H1 (cell line): ENCODE measurements at regions of chr11 and their contacts with region 1.

Region 1: DNA sequence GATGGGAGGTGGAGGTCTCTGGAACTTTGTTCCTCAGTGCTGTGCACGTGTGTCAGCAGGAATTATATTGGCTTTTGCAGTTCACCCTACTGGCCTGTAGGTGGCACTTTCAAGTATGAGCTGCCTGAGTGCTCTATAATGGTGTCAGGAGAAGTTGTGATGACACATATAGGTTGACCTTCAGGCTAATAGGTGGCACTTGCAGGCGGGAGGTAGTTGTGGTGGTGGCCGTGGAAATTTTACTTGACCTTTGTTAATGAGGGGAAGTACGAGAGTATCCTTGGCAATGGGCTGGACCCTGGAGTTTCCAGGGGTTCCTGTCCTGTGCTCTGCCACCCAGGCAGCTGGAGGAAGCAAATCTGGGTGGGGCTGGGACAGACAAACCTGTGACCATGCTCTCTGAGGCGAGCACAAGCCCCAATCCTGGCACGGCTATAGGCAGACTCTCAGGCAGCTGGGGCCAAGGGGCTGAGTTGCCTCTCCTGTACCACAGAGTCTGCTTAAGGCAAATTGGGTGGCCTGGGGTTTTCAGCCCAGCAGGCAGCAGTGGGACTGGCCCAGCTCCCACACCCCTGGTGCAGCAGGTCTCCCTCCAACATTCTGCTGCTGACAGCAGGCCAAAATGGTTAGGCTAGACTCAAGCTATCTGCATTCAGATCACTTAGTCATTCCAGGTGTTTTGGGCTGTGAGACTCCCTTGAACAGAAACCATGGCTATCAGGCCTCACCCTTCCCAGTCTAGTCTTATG is 147.5 kb upstream of the CTSC start:
- DNase-seq: peak in 1 of 2 experiments; percentile 63
- H3K4me3 ChIP-seq: no peak overlapping the region
- H3K27ac ChIP-seq: no peak overlapping the region
- H3K4me1 ChIP-seq: no peaks in the 10 kb centered on the region; a peak in 1 of 7 replicates
- H3K27me3 ChIP-seq: no peaks in the 10 kb centered on the region
- CTCF ChIP-seq: peak; percentile 36 to 86 (median 63)
- EP300 ChIP-seq: no peak
- POLR2A ChIP-seq: no peak
- RAD21 ChIP-seq: peak; percentile 38 to 64; a peak in 3 of 4 replicates

Region 2: DNA sequence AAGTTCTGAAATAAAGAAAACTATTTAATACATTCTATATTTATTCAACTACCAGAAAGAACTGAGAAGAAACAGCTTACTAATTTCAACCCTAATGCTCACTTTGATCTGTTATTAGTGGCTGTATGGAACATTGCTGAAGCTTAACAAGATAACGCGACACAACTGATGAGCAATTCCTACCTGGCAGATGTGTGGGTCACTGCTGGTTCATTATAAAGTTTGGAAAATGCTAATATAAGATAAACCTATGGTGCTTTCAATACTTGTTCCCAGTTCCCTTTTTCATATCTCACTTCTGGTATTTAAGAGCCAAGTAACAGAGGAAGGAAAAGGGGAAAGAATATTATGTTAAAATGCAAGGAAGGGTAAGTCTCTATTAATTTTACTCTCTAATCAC is 158.0 kb before region 1 on chr11:
- CTCF ChIA-PET with region 1: interaction called, 11 read pairs
- POLR2A ChIA-PET with region 1: no interaction called
- DNase-seq: no peak
- H3K4me3 ChIP-seq: no peak overlapping the region
- H3K27ac ChIP-seq: no peak overlapping the region
- H3K4me1 ChIP-seq: peaks cover 4 to 13% (median 6%) of the 10 kb centered on the region in 4 experiments; a peak in 5 of 7 replicates
- H3K27me3 ChIP-seq: no peaks in the 10 kb centered on the region
- CTCF ChIP-seq: no peak
- EP300 ChIP-seq: no peak
- POLR2A ChIP-seq: no peak
- RAD21 ChIP-seq: no peak

Region 3: GRCh38 chr11:88474655-88475054 is 10.4 kb before region 1 on chr11:
- CTCF ChIA-PET with region 1: interaction called, 11 read pairs
- POLR2A ChIA-PET with region 1: no interaction called
- DNase-seq: no peak
- H3K4me3 ChIP-seq: no peak overlapping the region
- H3K27ac ChIP-seq: no peak overlapping the region
- H3K4me1 ChIP-seq: no peaks in the 10 kb centered on the region
- H3K27me3 ChIP-seq: no peaks in the 10 kb centered on the region
- CTCF ChIP-seq: no peak
- EP300 ChIP-seq: no peak
- POLR2A ChIP-seq: no peak
- RAD21 ChIP-seq: no peak

Region 4: GRCh38 chr11:88501541-88501940 is 16.5 kb after region 1 on chr11:
- CTCF ChIA-PET with region 1: interaction called, 28 read pairs
- POLR2A ChIA-PET with region 1: no interaction called
- DNase-seq: no peak
- H3K4me3 ChIP-seq: no peak overlapping the region
- H3K27ac ChIP-seq: no peak overlapping the region
- H3K4me1 ChIP-seq: no peaks in the 10 kb centered on the region
- H3K27me3 ChIP-seq: no peaks in the 10 kb centered on the region
- CTCF ChIP-seq: no peak
- EP300 ChIP-seq: no peak
- POLR2A ChIP-seq: no peak
- RAD21 ChIP-seq: no peak

Region 5: DNA sequence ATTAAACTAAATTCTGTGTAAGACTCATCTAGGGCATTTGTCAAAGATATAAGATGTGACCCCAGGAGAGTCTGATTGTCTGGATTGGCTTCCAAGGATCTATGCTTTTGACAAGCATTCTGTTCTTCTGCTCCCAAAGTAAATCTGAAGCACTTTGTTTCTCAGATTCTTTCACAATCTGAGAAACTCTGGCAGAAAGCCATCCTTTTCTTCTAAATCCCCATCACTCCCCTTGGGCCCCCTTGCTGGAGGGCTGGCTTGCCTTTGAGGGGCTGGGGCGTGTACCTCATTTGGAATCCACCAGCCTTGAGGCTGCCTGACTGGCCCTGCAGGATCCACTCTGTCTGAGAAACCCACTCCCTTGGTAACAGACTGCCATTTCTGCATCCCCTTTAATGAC is 26.0 kb after region 1 on chr11:
- CTCF ChIA-PET with region 1: interaction called, 10 read pairs
- POLR2A ChIA-PET with region 1: interaction called, 7 read pairs
- DNase-seq: no peak
- H3K4me3 ChIP-seq: no peak overlapping the region
- H3K27ac ChIP-seq: no peak overlapping the region
- H3K4me1 ChIP-seq: peaks cover 0 to 6% (median 2%) of the 10 kb centered on the region in 4 experiments; a peak in 5 of 7 replicates
- H3K27me3 ChIP-seq: peaks cover 0 to 35% (median 18%) of the 10 kb centered on the region in 4 experiments; a peak in 6 of 7 replicates
- CTCF ChIP-seq: no peak
- EP300 ChIP-seq: no peak
- POLR2A ChIP-seq: no peak
- RAD21 ChIP-seq: no peak

Region 6: GRCh38 chr11:88555018-88555828 is 70.2 kb after region 1 on chr11:
- CTCF ChIA-PET with region 1: no interaction called
- POLR2A ChIA-PET with region 1: no interaction called
- DNase-seq: no peak
- H3K4me3 ChIP-seq: no peak overlapping the region
- H3K27ac ChIP-seq: no peak overlapping the region
- H3K4me1 ChIP-seq: peaks cover 0 to 2% (median 0%) of the 10 kb centered on the region in 4 experiments; a peak in 1 of 7 replicates
- H3K27me3 ChIP-seq: no peaks in the 10 kb centered on the region
- CTCF ChIP-seq: no peak
- EP300 ChIP-seq: no peak
- POLR2A ChIP-seq: no peak
- RAD21 ChIP-seq: no peak